A673 (cell line): ENCODE measurements at regions of chr1 and their contacts with region 1.

Region 1: DNA sequence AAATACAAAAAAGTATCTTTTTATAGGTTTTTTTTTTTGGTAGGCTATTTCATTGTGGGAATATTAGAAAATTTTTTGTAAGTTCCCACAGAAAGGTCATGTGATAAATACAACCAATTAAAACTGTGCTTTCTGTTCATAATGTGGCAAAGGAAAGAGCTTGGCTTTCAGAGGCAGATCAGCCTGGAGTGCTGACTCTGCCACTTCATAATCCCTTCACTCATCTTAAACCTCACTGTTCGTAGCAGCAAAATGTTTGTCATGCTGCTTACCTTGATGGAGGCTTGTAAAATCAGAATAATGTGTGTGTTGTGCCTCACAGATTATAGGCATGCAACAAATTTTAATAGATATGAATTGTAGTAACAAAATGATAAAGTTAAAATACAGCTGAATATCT is 176.8 kb downstream of the ZP4 start:
- DNase-seq: no peak
- H3K4me3 ChIP-seq: no peak overlapping the region
- H3K27ac ChIP-seq: no peak overlapping the region
- H3K4me1 ChIP-seq: no peaks in the 10 kb centered on the region
- H3K27me3 ChIP-seq: no peaks in the 10 kb centered on the region
- CTCF ChIP-seq: no peak

Region 2: DNA sequence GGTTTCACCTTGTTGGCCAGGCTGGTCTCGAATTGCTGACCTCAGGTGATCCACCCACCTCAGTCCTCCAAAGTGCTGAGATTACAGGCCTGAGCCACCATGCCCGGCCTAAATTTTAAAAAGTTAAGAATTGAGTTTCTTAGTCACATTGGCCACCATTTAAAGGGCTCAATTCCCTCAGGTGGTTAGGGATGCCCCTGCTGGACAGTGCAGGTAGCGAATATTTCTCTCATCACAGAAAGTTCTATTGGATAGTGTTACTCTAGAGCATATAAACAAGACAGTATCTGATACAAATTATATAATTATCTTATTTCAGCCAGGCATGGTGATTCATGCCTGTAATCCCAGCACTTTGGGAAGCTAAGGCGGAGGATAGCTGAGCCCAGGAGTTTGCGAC is 143.4 kb before region 1 on chr1:
- CTCF ChIA-PET with region 1: no interaction called
- POLR2A ChIA-PET with region 1: interaction called, 16 read pairs
- intact Hi-C with region 1: no loop called
- DNase-seq: no peak
- H3K4me3 ChIP-seq: no peak overlapping the region
- H3K27ac ChIP-seq: no peak overlapping the region
- H3K4me1 ChIP-seq: no peaks in the 10 kb centered on the region
- H3K27me3 ChIP-seq: no peaks in the 10 kb centered on the region
- CTCF ChIP-seq: no peak

Region 3: GRCh38 chr1:237873487-237874211 is 159.7 kb after region 1 on chr1:
- CTCF ChIA-PET with region 1: no interaction called
- POLR2A ChIA-PET with region 1: no interaction called
- intact Hi-C with region 1: no loop called
- DNase-seq: peak; percentile 77
- H3K4me3 ChIP-seq: no peak overlapping the region
- H3K27ac ChIP-seq: no peak overlapping the region
- H3K4me1 ChIP-seq: no peaks in the 10 kb centered on the region
- H3K27me3 ChIP-seq: no peaks in the 10 kb centered on the region
- CTCF ChIP-seq: no peak